Activated CD4-positive, alpha-beta memory T cell treated with anti-CD3 and anti-CD28 coated beads for 36 hours (primary cell): ENCODE measurements at regions of chr5 and their contacts with region 1.

Region 1: GRCh38 chr5:179559284-179560252 is 9.2 kb downstream of the RUFY1 start:
- DNase-seq: peak; percentile 97
- H3K4me3 Mint-ChIP-seq: peak overlapping the region; percentile 85
- H3K27ac Mint-ChIP-seq: peak overlapping the region; percentile 86
- H3K4me1 Mint-ChIP-seq: peaks cover 17% of the 10 kb centered on the region
- H3K27me3 Mint-ChIP-seq: no peaks in the 10 kb centered on the region

Region 2: GRCh38 chr5:178626484-178627258 is 932.9 kb before region 1 on chr5 and contains the start of gene CLK4:
- CTCF ChIA-PET with region 1: no interaction called
- POLR2A ChIA-PET with region 1: no interaction called
- intact Hi-C with region 1: loop called (anchors 10 kb)
- DNase-seq: peak; percentile 97
- H3K4me3 Mint-ChIP-seq: peak within 1 kb of the TSS; percentile 92
- H3K27ac Mint-ChIP-seq: peak within 1 kb of the TSS; percentile 98
- H3K4me1 Mint-ChIP-seq: peaks cover 28% of the 10 kb centered on the region
- H3K27me3 Mint-ChIP-seq: no peaks in the 10 kb centered on the region
- total RNA-seq, gene CLK4: 25.1 to 26.0 TPM

Region 3: DNA sequence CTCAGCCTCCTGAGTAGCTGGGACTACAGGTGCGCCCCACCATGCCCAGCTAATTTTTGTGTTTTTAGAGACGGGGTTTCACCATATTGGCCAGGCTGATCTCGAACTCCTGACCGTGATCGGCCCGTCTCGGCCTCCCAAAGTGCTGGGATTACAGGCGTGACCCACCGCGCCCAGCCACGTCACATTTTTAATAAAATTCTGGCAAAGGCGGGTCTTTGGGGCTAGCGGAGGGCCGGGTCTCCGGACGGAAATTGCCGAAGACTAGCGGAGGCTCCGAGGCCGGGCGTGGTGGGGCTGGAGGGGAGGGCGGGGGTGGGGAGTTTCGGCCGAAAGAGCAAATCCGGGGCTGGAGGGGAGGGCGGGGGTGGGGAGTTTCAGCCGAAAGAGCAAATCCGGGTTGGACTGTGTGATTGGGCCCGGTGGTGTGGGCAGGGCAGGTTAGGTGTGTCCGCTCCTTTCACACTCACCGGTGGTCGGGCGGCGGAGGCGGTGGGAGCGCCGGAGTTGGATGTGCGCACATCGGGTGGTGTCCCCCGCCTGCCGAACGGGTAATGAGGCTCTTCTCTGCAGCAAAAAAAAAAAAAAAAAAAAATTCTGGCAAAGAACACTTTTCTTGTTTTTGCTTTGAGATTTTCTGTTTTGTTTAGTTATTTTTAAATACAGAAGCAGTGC is 17.9 kb after region 1 on chr5:
- CTCF ChIA-PET with region 1: no interaction called
- POLR2A ChIA-PET with region 1: no interaction called
- intact Hi-C with region 1: no loop called
- DNase-seq: no peak
- H3K4me3 Mint-ChIP-seq: no peak overlapping the region
- H3K27ac Mint-ChIP-seq: no peak overlapping the region
- H3K4me1 Mint-ChIP-seq: no peaks in the 10 kb centered on the region
- H3K27me3 Mint-ChIP-seq: no peaks in the 10 kb centered on the region

Region 4: DNA sequence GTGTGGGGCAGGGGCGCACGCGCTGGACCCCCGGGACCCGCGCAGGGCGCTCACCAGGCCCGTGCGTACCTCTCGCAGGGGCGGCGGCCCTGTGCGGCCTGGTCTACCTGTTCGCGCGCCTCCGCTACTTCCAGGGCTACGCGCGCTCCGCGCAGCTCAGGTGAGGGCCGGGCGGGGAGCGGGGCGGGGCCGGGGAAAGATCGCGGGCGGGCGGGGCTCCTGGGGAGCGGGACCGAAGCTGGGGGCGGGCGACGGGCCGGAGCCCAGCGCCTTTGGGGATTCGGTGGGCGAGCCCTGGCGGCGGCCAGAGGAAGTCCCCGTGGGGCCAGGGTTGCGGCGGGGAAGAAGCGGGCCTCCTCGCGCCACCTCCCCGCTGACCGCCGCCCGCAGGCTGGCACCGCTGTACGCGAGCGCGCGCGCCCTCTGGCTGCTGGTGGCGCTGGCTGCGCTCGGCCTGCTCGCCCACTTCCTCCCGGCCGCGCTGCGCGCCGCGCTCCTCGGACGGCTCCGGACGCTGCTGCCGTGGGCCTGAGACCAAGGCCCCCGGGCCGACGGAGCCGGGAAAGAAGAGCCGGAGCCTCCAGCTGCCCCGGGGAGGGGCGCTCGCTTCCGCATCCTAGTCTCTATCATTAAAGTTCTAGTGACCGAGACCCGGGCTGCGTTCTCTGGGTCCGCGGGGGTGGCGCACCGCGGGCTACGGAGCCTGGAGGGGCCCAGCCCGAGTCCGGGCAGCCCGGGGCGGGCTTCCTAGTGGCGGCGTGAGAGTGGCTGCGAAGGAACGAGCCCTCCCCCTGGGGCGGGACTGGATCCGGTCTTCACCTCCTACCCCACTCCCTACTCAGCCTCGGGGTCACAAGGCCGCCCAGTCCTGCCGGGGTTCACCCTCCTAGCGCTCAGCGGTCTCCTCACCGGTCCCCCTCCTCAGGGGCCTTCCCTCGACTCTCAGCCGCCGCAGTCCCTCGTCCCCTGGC is 236.6 kb after region 1 on chr5:
- CTCF ChIA-PET with region 1: no interaction called
- POLR2A ChIA-PET with region 1: no interaction called
- intact Hi-C with region 1: loop called (anchors 10 kb)
- DNase-seq: peak; percentile 81
- H3K4me3 Mint-ChIP-seq: peak overlapping the region; percentile 39
- H3K27ac Mint-ChIP-seq: peak overlapping the region; percentile 30
- H3K4me1 Mint-ChIP-seq: peaks cover 25% of the 10 kb centered on the region
- H3K27me3 Mint-ChIP-seq: no peaks in the 10 kb centered on the region